Pancreas (tissue), 10 donors: ENCODE measurements at regions of chr19 and their contacts with region 1.

Region 1: DNA sequence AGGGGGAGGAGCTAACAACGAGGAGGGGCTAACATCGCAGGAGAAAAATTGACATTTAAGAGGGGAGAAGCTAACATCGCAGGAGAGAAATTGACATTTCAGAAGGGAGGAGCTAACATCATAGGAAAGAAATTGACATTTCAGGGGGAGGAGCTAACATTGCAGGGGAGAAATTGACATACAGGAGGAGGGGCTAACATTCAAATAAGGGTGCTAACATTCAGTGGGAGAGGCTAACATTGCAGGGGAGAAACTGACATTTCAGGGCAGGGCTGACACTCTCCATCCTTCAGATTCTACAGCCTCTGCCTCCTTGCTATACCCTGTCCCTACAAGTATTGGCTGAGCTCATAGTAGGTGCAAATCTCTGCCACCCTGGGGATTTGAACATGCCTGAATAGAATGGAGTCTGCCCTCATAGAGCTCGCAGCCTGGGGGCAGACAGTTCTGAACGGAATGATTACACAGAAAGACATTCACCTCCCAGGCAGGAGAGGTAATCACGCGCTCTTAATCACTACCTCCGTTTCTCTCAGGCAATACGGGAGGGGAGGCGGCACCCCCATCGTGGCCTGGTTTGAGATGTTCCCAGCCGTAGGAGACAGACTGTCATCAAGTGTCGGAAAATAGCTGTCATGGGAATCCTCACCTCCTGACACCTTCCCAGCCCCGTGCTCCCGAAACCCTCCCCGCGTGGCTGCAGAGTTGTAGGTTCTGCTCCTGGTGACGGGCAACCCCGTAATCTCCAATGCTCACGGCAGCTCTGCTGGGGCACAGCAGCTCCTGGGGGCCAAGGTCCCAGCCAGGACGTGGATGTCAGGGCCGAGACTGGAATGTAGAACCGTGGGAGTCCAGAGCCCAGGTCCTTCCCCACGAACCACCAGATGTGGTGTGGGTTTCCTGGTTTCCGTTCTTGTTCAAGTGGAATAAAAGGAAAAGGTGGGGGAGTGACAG is 9.5 kb downstream of the GPR32 start:
- DNase-seq: no peak
- ATAC-seq: no peak
- H3K4me3 ChIP-seq: no peak overlapping the region
- H3K27ac ChIP-seq: no peak overlapping the region
- H3K4me1 ChIP-seq: no peaks in the 10 kb centered on the region
- H3K27me3 ChIP-seq: peaks cover 0 to 46% (median 14%) of the 10 kb centered on the region in 4 donors
- CTCF ChIP-seq: no peak

Region 2: GRCh38 chr19:50357178-50358100 is 422.3 kb before region 1 on chr19:
- intact Hi-C with region 1: loop called in 1 of 3 experiments (anchors 5 kb)
- DNase-seq: peak; percentile 67 to 88 (median 83)
- ATAC-seq: peak; percentile 76 to 90 (median 86)
- H3K4me3 ChIP-seq: peak overlapping the region; percentile 23 to 53 (median 42)
- H3K27ac ChIP-seq: peak overlapping the region; percentile 73 to 89 (median 85)
- H3K4me1 ChIP-seq: no peaks in the 10 kb centered on the region
- H3K27me3 ChIP-seq: no peaks in the 10 kb centered on the region
- CTCF ChIP-seq: peak; percentile 71 to 81 (median 77)

Region 3: GRCh38 chr19:50542943-50543342 is 236.8 kb before region 1 on chr19:
- intact Hi-C with region 1: loop called in 1 of 3 experiments (anchors 5 kb)
- DNase-seq: no peak
- ATAC-seq: no peak
- H3K4me3 ChIP-seq: no peak overlapping the region
- H3K27ac ChIP-seq: no peak overlapping the region
- H3K4me1 ChIP-seq: no peaks in the 10 kb centered on the region
- H3K27me3 ChIP-seq: no peaks in the 10 kb centered on the region
- CTCF ChIP-seq: no peak

Region 4: DNA sequence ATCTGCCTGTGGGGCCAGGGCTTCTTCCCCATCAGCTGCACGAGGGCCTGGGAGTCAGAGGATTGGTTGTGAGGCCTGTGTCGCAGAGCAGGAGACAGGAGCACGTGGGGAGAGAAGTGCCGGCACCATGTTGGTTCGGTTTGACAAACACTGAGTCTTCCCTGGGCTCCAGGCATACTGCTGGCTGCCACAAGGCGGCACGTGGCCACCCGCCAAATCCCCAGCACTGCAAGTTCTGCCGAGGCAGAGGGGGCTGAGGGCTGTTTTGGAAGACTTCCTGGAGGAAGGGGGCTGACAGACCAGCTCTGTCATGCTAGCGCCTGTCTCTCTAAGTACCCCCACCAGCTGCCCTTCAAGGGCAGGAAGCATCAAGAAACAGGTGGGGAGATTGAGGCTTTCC is 69.7 kb before region 1 on chr19:
- intact Hi-C with region 1: no loop called
- DNase-seq: no peak
- ATAC-seq: no peak
- H3K4me3 ChIP-seq: no peak overlapping the region
- H3K27ac ChIP-seq: no peak overlapping the region
- H3K4me1 ChIP-seq: no peaks in the 10 kb centered on the region
- H3K27me3 ChIP-seq: no peaks in the 10 kb centered on the region
- CTCF ChIP-seq: no peak